Colonic mucosa (tissue), 4 donors: ENCODE measurements at regions of chr2 and their contacts with region 1.

Region 1: DNA sequence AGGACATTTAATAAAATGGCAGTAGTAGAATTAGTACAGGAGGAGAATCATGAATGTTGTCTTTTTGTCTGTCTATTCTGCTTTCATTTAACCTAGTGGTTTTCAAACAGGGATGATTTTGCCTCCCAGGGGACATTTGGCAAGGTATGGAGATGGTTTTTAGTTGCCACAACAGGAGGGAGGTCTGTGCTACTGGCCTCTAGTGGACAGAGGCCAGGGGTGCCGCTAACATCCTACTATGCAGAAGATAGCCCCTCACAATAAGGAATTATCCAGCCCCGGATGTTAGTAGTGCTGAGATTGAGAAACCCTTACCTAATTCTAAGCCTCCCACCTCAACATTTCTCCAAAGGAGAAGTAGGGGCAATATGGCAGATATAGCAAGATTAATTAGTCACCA is 18.3 kb downstream of the FASTKD2 start:
- DNase-seq: no peak
- H3K4me3 ChIP-seq: no peak overlapping the region
- H3K27ac ChIP-seq: no peak overlapping the region
- H3K4me1 ChIP-seq: no peaks in the 10 kb centered on the region
- H3K27me3 ChIP-seq: no peaks in the 10 kb centered on the region
- CTCF ChIP-seq: no peak

Region 2: DNA sequence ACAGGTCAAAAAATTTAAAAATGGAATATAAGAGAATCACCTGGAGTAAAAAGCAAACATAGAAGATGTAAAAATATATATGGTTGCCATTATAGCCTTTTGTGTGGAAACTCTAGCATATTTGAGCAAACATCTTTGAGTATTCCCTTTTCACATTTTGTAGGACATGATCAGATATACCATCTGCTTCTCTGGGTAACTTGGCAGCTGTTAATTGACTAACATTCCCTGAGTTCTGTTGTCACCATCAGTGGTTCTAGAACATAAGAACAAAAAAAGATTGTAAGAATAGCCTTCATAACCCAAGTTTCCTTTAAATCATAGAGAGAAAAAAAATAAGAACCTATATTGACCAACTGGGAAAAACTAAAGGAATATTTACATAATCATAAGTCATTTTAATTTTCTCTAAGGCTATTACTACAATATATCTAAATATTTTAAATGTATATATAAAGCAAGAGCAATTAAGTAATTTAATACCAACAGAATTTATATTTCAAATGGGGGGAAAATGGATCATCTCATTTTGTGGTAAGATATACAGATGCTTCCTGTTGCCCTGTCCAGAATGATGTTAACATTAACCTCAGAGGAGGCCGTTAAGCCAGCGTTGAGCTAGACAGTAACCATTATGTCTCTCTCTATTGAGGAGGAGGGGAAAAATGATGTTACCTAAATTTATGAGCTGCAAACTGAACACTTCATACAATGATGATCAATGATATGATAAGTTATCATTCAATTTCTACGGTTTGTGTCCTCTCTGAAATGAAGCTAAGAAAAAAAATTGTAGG is 688.0 kb before region 1 on chr2:
- intact Hi-C with region 1: no loop called
- DNase-seq: no peak
- H3K4me3 ChIP-seq: no peak overlapping the region
- H3K27ac ChIP-seq: no peak overlapping the region
- H3K4me1 ChIP-seq: no peaks in the 10 kb centered on the region
- H3K27me3 ChIP-seq: no peaks in the 10 kb centered on the region
- CTCF ChIP-seq: no peak

Region 3: GRCh38 chr2:206693399-206694137 is 90.2 kb before region 1 on chr2:
- intact Hi-C with region 1: loop called (anchors 2 kb)
- DNase-seq: peak; percentile 29
- H3K4me3 ChIP-seq: no peak overlapping the region
- H3K27ac ChIP-seq: no peak overlapping the region
- H3K4me1 ChIP-seq: no peaks in the 10 kb centered on the region
- H3K27me3 ChIP-seq: no peaks in the 10 kb centered on the region
- CTCF ChIP-seq: peak; percentile 43

Region 4: GRCh38 chr2:207035875-207036274 is 252.2 kb after region 1 on chr2:
- intact Hi-C with region 1: no loop called
- DNase-seq: no peak
- H3K4me3 ChIP-seq: no peak overlapping the region
- H3K27ac ChIP-seq: no peak overlapping the region
- H3K4me1 ChIP-seq: no peaks in the 10 kb centered on the region
- H3K27me3 ChIP-seq: no peaks in the 10 kb centered on the region
- CTCF ChIP-seq: no peak

Region 5: GRCh38 chr2:207265869-207266268 is 482.2 kb after region 1 on chr2:
- intact Hi-C with region 1: no loop called
- DNase-seq: no peak
- H3K4me3 ChIP-seq: no peak overlapping the region
- H3K27ac ChIP-seq: no peak overlapping the region
- H3K4me1 ChIP-seq: no peaks in the 10 kb centered on the region
- H3K27me3 ChIP-seq: no peaks in the 10 kb centered on the region
- CTCF ChIP-seq: no peak